PC-3 (cell line): ENCODE measurements at regions of chr11 and their contacts with region 1.

Region 1: GRCh38 chr11:122101625-122102291 is 14.3 kb downstream of the BLID start:
- DNase-seq: no peak
- ATAC-seq: peak; percentile 32
- H3K4me3 ChIP-seq: no peak overlapping the region
- H3K27ac ChIP-seq: peak overlapping the region; percentile 53
- H3K4me1 ChIP-seq: peaks cover 91% of the 10 kb centered on the region
- H3K27me3 ChIP-seq: no peaks in the 10 kb centered on the region
- CTCF ChIP-seq: peak; percentile 51

Region 2: GRCh38 chr11:121927097-121927785 is 174.5 kb before region 1 on chr11:
- CTCF ChIA-PET with region 1: no interaction called
- POLR2A ChIA-PET with region 1: no interaction called
- intact Hi-C with region 1: no loop called
- DNase-seq: no peak
- ATAC-seq: no peak
- H3K4me3 ChIP-seq: no peak overlapping the region
- H3K27ac ChIP-seq: no peak overlapping the region
- H3K4me1 ChIP-seq: peaks cover 12% of the 10 kb centered on the region
- H3K27me3 ChIP-seq: no peaks in the 10 kb centered on the region
- CTCF ChIP-seq: peak; percentile 26; the same call in 1 of the 2 replicates

Region 3: GRCh38 chr11:122020902-122021301 is 80.9 kb before region 1 on chr11:
- CTCF ChIA-PET with region 1: no interaction called
- POLR2A ChIA-PET with region 1: no interaction called
- intact Hi-C with region 1: loop called (anchors 5 kb)
- DNase-seq: peak; percentile 46
- ATAC-seq: peak; percentile 18; the same call in 1 of the 2 replicates
- H3K4me3 ChIP-seq: no peak overlapping the region
- H3K27ac ChIP-seq: no peak overlapping the region
- H3K4me1 ChIP-seq: 0 out of 2 replicates have a peak, but pooled peaks cover 7% of the 10 kb centered on the region
- H3K27me3 ChIP-seq: no peaks in the 10 kb centered on the region
- CTCF ChIP-seq: peak; percentile 70

Region 4: DNA sequence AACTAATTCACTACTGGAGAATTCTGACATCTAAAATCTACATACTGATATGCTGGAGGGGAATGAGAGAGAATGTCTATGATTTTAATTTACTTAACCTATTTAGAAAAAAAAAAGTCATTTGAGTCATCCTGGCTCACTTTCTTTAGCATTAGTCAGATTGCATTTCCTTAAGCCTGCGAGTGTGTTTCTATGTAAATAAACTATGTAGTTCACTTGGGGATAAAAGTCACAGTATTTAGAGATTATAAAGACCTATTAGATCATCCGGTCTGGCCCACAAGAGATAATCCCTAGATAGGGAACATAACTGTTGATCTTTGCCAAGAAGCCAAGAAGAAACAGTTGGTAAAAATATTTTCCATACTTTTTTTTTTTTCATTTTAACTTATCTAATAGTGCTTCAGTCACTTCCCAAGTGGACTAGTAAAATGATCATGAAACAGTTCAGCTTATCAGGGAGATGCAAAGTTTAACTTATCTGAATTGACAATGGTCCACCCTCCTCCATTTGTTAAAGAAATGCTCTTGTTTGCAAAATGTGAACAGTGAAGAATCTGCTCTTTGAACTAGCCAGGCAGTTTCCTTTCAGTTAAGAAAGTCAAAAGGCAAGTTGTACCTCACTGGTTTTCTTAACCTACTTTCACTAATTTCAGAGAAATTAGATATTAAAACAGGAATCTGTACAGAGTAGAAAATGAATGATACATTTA is 35.5 kb after region 1 on chr11:
- CTCF ChIA-PET with region 1: no interaction called
- POLR2A ChIA-PET with region 1: interaction called, 3 read pairs
- intact Hi-C with region 1: loop called (anchors 5 kb)
- DNase-seq: peak; percentile 96
- ATAC-seq: peak; percentile 47
- H3K4me3 ChIP-seq: no peak overlapping the region
- H3K27ac ChIP-seq: peak overlapping the region; percentile 78
- H3K4me1 ChIP-seq: peaks cover 81% of the 10 kb centered on the region
- H3K27me3 ChIP-seq: no peaks in the 10 kb centered on the region
- CTCF ChIP-seq: no peak

Region 5: GRCh38 chr11:122202951-122203456 is 101.2 kb after region 1 on chr11:
- CTCF ChIA-PET with region 1: no interaction called
- POLR2A ChIA-PET with region 1: no interaction called
- intact Hi-C with region 1: loop called (anchors 2 kb)
- DNase-seq: peak; percentile 95
- ATAC-seq: peak; percentile 72
- H3K4me3 ChIP-seq: peak overlapping the region; percentile 70
- H3K27ac ChIP-seq: peak overlapping the region; percentile 94
- H3K4me1 ChIP-seq: peaks cover 40% of the 10 kb centered on the region
- H3K27me3 ChIP-seq: no peaks in the 10 kb centered on the region
- CTCF ChIP-seq: peak; percentile 99